ENCODE measurements at regions of chr7 and their contacts with region 1.

Region 1: DNA sequence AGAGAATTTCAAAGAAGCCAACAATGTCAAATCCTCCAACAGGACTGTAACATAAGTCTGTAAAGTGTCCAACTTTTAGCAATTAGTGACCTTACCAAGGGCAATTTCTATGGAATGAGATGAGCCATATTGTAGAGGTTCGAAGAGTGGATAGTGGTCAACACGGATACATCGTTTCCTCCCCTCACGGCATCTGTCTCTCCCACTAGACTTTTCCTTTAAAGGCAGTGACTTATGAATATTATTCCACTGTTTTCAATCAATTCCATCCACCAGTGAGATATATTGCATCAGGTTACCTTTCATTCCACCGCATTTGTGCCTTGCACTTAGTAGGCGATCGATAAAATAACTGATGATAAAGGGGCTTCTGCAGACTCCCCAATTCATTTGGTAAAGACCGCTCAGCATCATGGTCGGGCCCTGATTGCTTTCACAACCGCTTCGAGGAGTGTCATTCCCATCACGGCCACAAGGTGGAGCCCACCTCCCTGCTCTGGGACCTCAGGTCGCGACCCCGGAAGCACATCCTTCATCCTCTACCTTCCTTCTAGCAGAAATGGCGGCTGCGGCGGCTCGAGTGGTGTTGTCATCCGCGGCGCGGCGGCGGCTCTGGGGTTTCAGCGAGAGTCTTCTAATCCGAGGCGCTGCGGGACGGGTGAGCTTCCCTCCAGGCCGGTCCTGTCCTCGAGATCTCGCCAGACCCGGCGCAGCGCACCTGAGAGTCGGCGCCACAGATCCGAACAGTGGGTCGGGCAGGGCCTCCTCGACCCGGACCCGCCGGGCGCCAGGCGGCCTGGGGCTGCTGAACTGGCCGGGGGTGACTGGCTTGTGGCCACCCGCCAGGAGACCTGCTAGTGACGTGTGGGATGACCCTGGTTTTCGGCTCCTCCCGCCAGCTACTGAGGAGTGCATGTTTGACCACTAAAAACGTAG is at the start of gene PMPCB:
- DNase-seq: peak; percentile 93
- H3K4me3 ChIP-seq: peak within 1 kb of the TSS; percentile 99
- H3K27ac ChIP-seq: peak within 1 kb of the TSS; percentile 82
- H3K4me1 ChIP-seq: peaks cover 21% of the 10 kb centered on the region
- CTCF ChIP-seq: peak; percentile 84
- total RNA-seq, gene PMPCB: 48.5 and 57.5 TPM in 2 replicates

Region 2: DNA sequence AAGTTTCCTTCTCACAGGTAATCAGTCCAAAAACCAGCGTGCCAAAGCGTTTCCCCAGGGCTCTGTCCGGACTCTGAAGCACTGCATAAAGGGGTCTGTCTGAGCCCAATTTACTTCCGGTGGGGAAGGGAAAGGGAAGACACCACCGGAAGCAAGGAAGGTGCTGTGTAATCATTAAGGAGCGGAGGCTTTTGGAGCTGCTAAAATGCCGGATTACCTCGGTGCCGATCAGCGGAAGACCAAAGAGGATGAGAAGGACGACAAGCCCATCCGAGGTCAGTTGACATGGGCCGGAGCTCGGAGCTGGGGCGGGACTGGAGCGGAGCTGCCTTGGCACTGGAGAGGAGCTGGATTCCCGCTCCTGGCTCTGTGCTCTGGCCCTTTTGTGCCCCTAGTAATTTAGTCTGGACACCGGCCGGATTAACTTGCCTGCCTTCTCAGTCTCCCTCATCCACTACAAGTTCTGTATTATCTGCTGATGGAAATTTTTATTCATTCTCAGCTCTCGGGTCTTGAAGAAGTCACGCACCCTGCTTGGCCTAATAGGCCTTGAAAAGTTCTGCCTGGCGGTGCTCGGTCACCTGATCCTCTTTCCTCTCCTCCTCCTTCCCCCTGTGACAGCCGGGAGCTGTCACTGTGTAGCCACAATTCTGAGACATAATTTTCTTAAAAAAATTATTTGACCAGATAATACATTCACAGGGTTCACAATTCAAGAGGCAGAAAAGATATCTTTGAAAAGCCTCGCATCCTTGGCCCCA is 50.5 kb after region 1 on chr7 and contains the start of gene PSMC2:
- CTCF ChIA-PET with region 1: no interaction called
- POLR2A ChIA-PET with region 1: interaction called, 3 read pairs
- intact Hi-C with region 1: loop called (anchors 2 kb)
- DNase-seq: peak; percentile 92
- H3K4me3 ChIP-seq: peak within 1 kb of the TSS; percentile 85
- H3K27ac ChIP-seq: peak within 1 kb of the TSS; percentile 74
- H3K4me1 ChIP-seq: peaks cover 46% of the 10 kb centered on the region
- CTCF ChIP-seq: no peak
- total RNA-seq, gene PSMC2: 77.7 and 95.2 TPM in 2 replicates

Region 3: GRCh38 chr7:103412151-103412550 is 115.0 kb after region 1 on chr7:
- CTCF ChIA-PET with region 1: no interaction called
- POLR2A ChIA-PET with region 1: no interaction called
- intact Hi-C with region 1: loop called (anchors 1 kb)
- DNase-seq: no peak
- H3K4me3 ChIP-seq: no peak overlapping the region
- H3K27ac ChIP-seq: no peak overlapping the region
- H3K4me1 ChIP-seq: no peaks in the 10 kb centered on the region
- CTCF ChIP-seq: no peak